Mucosa of descending colon (tissue), 3 donors: ENCODE measurements at regions of chr16 and their contacts with region 1.

Region 1: DNA sequence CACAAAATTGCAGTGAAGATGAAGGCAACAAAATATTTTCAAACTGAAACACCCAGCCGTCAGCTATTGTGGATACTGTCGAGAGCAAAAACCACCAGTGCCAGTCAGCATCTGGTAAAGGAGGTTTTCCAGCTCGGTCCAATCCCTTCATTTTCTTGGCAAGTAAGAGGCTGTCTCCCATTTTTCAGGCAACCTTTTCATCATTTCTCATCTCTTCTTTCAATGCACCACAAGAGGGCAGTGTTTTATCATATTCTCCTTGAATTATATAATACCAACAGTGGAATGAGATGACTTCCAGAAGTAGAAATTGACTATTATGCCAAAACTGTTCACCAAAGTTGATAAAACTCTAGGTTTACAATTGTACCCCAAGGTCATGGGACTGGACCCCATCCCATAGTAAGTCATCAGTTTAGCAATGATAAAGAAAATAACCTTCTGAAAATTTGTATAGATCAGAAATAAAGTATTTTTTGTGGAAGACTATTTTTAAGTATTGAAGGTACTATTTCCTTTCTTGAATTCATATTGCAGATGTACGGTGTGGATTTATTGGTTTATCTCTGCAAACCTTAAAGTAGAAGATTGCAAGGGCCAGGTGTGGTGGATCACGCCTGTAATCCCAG is 16.8 kb downstream of the NQO1 start:
- DNase-seq: peak in 1 of 3 donors; percentile 31
- ATAC-seq: peak; percentile 73
- H3K4me3 ChIP-seq: no peak overlapping the region
- H3K4me1 ChIP-seq: peaks cover 12% of the 10 kb centered on the region
- CTCF ChIP-seq: peak; percentile 51

Region 2: GRCh38 chr16:69535123-69536050 is 174.2 kb before region 1 on chr16:
- intact Hi-C with region 1: no loop called
- DNase-seq: no peak
- ATAC-seq: no peak
- H3K4me3 ChIP-seq: no peak overlapping the region
- H3K4me1 ChIP-seq: no peaks in the 10 kb centered on the region
- CTCF ChIP-seq: no peak

Region 3: GRCh38 chr16:69754469-69755310 is 45.1 kb after region 1 on chr16 and contains the start of gene NOB1:
- intact Hi-C with region 1: loop called in 1 of 2 experiments (anchors 5 kb)
- DNase-seq: peak; percentile 96 to 98 (median 98)
- ATAC-seq: peak; percentile 99
- H3K4me3 ChIP-seq: peak within 1 kb of the TSS; percentile 78
- H3K4me1 ChIP-seq: peaks cover 19% of the 10 kb centered on the region
- CTCF ChIP-seq: peak; percentile 98
- total RNA-seq, gene NOB1: 36.1 to 38.9 (median 36.4) TPM